Naive thymus-derived CD4-positive, alpha-beta T cell (primary cell): ENCODE measurements at regions of chr3 and their contacts with region 1.

Region 1: GRCh38 chr3:15815696-15816095 is 17.9 kb upstream of the ANKRD28 start:
- DNase-seq: peak in 6 of 9 donors; percentile 12 to 48 (median 28)
- ATAC-seq: peak; percentile 53
- H3K4me3 ChIP-seq: no peak overlapping the region
- H3K4me3 Mint-ChIP-seq: no peak overlapping the region
- H3K27ac ChIP-seq: no peak overlapping the region
- H3K27ac Mint-ChIP-seq: peak overlapping the region in 1 of 9 donors; percentile 59
- H3K4me1 ChIP-seq: peaks cover 0 to 8% of the 10 kb centered on the region in 2 donors
- H3K4me1 Mint-ChIP-seq: peaks cover 6 to 47% (median 43%) of the 10 kb centered on the region in 7 donors
- H3K27me3 ChIP-seq: no peaks in the 10 kb centered on the region
- H3K27me3 Mint-ChIP-seq: no peaks in the 10 kb centered on the region

Region 2: DNA sequence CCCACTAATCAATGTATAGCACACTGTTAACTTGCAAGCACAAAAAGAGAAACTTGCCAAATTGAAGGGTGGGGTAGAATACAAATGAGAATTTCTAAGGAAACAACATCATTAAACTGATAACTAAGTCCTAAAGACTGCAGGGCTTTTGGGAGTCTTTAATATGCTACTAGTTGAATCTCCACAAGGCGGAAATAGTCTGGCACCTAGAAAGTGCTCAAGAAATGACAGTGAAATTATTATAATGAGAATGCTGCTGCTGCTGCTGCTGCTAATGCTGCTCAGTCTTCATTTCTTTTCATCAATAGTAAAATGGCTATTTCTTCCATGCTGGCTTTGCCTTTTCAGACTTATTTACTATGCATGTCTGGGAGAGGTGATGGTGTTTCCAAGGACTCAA is 122.3 kb before region 1 on chr3:
- CTCF ChIA-PET with region 1: no interaction called
- POLR2A ChIA-PET with region 1: no interaction called
- intact Hi-C with region 1: loop called in 1 of 2 experiments (anchors 5 kb)
- DNase-seq: no peak
- ATAC-seq: no peak
- H3K4me3 ChIP-seq: no peak overlapping the region
- H3K4me3 Mint-ChIP-seq: no peak overlapping the region
- H3K27ac ChIP-seq: no peak overlapping the region
- H3K27ac Mint-ChIP-seq: no peak overlapping the region
- H3K4me1 ChIP-seq: no peaks in the 10 kb centered on the region
- H3K4me1 Mint-ChIP-seq: peaks cover 0 to 9% (median 5%) of the 10 kb centered on the region in 7 donors
- H3K27me3 ChIP-seq: no peaks in the 10 kb centered on the region
- H3K27me3 Mint-ChIP-seq: no peaks in the 10 kb centered on the region

Region 3: GRCh38 chr3:15831930-15832329 is 16.2 kb after region 1 on chr3:
- CTCF ChIA-PET with region 1: interaction called, 4 read pairs
- POLR2A ChIA-PET with region 1: no interaction called
- intact Hi-C with region 1: loop called in 1 of 2 experiments (anchors 2 kb)
- DNase-seq: no peak
- ATAC-seq: no peak
- H3K4me3 ChIP-seq: no peak overlapping the region
- H3K4me3 Mint-ChIP-seq: no peak overlapping the region
- H3K27ac ChIP-seq: no peak overlapping the region
- H3K27ac Mint-ChIP-seq: no peak overlapping the region
- H3K4me1 ChIP-seq: no peaks in the 10 kb centered on the region
- H3K4me1 Mint-ChIP-seq: peaks cover 3 to 51% (median 23%) of the 10 kb centered on the region in 7 donors
- H3K27me3 ChIP-seq: no peaks in the 10 kb centered on the region
- H3K27me3 Mint-ChIP-seq: no peaks in the 10 kb centered on the region

Region 4: GRCh38 chr3:15953841-15954240 is 138.1 kb after region 1 on chr3:
- CTCF ChIA-PET with region 1: no interaction called
- POLR2A ChIA-PET with region 1: no interaction called
- intact Hi-C with region 1: loop called (anchors 1 to 10 kb)
- DNase-seq: peak in 3 of 9 donors; percentile 3 to 15 (median 7)
- ATAC-seq: no peak
- H3K4me3 ChIP-seq: no peak overlapping the region
- H3K4me3 Mint-ChIP-seq: no peak overlapping the region
- H3K27ac ChIP-seq: no peak overlapping the region
- H3K27ac Mint-ChIP-seq: no peak overlapping the region
- H3K4me1 ChIP-seq: no peaks in the 10 kb centered on the region
- H3K4me1 Mint-ChIP-seq: no peaks in the 10 kb centered on the region
- H3K27me3 ChIP-seq: no peaks in the 10 kb centered on the region
- H3K27me3 Mint-ChIP-seq: peaks cover 0 to 4% (median 0%) of the 10 kb centered on the region in 5 donors

Region 5: DNA sequence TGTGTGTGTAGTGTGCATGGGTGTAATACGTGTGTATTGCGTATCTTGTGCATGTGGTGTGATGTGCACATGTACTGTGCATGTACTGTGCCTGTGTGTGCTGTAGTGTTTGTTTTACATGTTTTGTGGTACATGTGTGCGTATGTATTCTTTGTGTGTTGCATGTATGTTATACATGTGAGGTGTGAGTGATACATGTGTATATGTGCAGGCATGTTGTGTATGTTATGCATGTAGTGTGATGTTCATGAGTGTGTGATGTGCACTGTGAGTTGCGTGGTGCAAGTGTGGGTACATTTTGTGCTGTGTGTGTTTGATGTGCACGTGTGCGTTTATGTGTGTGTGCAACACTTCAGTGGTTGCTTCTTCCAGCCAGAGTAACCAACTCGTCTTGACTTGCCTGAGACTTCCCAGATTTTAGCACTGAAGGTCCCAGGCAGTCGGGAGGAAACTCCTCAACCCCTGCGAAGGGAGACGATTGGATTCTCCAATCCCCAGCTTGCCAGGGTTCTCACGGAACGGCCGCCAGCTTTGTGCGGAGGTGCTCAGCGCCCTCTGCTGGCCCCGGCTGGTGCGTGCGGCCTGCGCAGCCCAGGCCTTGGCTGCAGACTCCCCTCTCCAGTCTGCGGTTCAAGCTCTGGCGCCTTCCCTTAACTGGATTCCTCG is 362.4 kb after region 1 on chr3:
- CTCF ChIA-PET with region 1: interaction called, 7 read pairs
- POLR2A ChIA-PET with region 1: no interaction called
- intact Hi-C with region 1: loop called in 1 of 2 experiments (anchors 1 kb)
- DNase-seq: peak; percentile 10 to 72 (median 48)
- ATAC-seq: peak; percentile 75
- H3K4me3 ChIP-seq: no peak overlapping the region
- H3K4me3 Mint-ChIP-seq: peak overlapping the region in 2 of 10 donors; percentile 38 to 39
- H3K27ac ChIP-seq: no peak overlapping the region
- H3K27ac Mint-ChIP-seq: peak overlapping the region in 1 of 9 donors; percentile 40
- H3K4me1 ChIP-seq: no peaks in the 10 kb centered on the region
- H3K4me1 Mint-ChIP-seq: peaks cover 0 to 7% (median 5%) of the 10 kb centered on the region in 7 donors
- H3K27me3 ChIP-seq: no peaks in the 10 kb centered on the region
- H3K27me3 Mint-ChIP-seq: peaks cover 9 to 23% (median 19%) of the 10 kb centered on the region in 5 donors

Region 6: DNA sequence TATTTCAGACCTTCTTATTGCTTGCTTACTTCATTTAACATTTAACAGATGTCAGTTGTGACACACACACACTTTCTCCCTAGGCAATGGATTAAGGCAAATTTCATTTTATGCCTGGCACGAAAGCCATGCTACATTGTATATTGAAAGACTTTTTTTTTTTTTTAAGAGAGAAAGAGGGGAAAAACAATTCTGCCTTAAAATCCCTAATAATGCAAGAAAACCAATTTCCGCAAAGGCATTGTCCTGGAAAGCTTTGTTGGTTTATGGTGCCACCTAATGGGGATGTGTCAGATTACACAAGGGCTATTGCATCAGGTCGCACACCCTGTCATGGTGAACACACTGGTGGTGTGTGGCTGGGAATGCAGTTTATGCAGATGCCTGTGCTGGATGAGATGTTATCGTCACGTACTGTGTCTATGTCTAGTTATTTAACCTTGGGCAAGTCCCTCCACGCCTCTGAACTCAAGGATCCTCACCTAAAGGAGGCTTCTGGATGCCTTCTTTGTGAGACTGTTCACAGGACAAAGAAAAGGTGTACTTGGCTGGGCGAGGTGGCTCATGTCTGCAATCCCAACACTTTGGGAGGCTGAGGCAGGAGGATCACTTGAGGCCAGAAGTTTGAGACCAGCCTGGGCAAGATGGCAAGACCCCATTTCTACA is 735.1 kb after region 1 on chr3:
- CTCF ChIA-PET with region 1: no interaction called
- POLR2A ChIA-PET with region 1: no interaction called
- intact Hi-C with region 1: loop called (anchors 2 to 5 kb)
- DNase-seq: peak; percentile 36 to 82 (median 76)
- ATAC-seq: peak; percentile 98
- H3K4me3 ChIP-seq: no peak overlapping the region
- H3K4me3 Mint-ChIP-seq: peak overlapping the region in 1 of 10 donors; percentile 10
- H3K27ac ChIP-seq: no peak overlapping the region
- H3K27ac Mint-ChIP-seq: peak overlapping the region in 5 of 9 donors; percentile 16 to 67 (median 36)
- H3K4me1 ChIP-seq: peaks cover 0 to 4% of the 10 kb centered on the region in 2 donors
- H3K4me1 Mint-ChIP-seq: peaks cover 6 to 15% (median 7%) of the 10 kb centered on the region in 7 donors
- H3K27me3 ChIP-seq: no peaks in the 10 kb centered on the region
- H3K27me3 Mint-ChIP-seq: peaks cover 0 to 11% (median 9%) of the 10 kb centered on the region in 5 donors